GM18951 (cell line): ENCODE measurements at regions of chr2 and their contacts with region 1.

Region 1: GRCh38 chr2:180625006-180625844 is 355.2 kb upstream of the UBE2E3 start:
- POLR2A ChIP-seq: no peak

Region 2: DNA sequence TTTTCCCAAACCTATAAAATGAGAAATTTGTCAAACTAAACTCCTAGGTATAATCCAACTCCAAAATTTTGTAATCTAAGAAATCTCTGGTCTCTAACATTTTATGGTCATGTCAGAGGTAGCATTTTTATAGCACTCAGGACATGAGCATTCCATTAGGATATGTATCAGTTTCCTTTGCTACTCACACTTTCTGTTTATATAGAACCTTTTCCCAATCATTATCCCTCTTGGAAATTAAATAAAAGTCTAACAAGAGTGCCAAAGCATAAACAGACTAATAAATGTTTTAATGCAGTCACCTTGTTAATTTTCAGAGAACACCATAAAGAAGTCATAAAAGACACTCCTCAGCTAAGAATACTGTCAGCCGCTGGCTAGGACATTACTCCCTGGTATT is 318.1 kb before region 1 on chr2:
- in situ Hi-C with region 1: no loop called
- POLR2A ChIP-seq: no peak

Region 3: GRCh38 chr2:181058378-181059269 is 433.4 kb after region 1 on chr2:
- in situ Hi-C with region 1: loop called (anchors 25 kb)
- POLR2A ChIP-seq: no peak